Heart left ventricle (tissue), 16 donors: ENCODE measurements at regions of chr4 and their contacts with region 1.

Region 1: GRCh38 chr4:91373546-91373945 is 930.2 kb upstream of the GRID2 start:
- DNase-seq: no peak
- ATAC-seq: no peak
- H3K4me3 ChIP-seq: no peak overlapping the region
- H3K27ac ChIP-seq: no peak overlapping the region
- H3K4me1 ChIP-seq: no peaks in the 10 kb centered on the region
- H3K27me3 ChIP-seq: no peaks in the 10 kb centered on the region
- CTCF ChIP-seq: no peak
- POLR2A ChIP-seq: no peak

Region 2: GRCh38 chr4:91359714-91360051 is 13.9 kb before region 1 on chr4:
- intact Hi-C with region 1: loop called in 1 of 10 experiments (anchors 1 kb)
- DNase-seq: no peak
- ATAC-seq: no peak
- H3K4me3 ChIP-seq: no peak overlapping the region
- H3K27ac ChIP-seq: no peak overlapping the region
- H3K4me1 ChIP-seq: no peaks in the 10 kb centered on the region
- H3K27me3 ChIP-seq: no peaks in the 10 kb centered on the region
- CTCF ChIP-seq: no peak
- POLR2A ChIP-seq: no peak